B cell (primary cell): ENCODE measurements at regions of chr9 and their contacts with region 1.

Region 1: DNA sequence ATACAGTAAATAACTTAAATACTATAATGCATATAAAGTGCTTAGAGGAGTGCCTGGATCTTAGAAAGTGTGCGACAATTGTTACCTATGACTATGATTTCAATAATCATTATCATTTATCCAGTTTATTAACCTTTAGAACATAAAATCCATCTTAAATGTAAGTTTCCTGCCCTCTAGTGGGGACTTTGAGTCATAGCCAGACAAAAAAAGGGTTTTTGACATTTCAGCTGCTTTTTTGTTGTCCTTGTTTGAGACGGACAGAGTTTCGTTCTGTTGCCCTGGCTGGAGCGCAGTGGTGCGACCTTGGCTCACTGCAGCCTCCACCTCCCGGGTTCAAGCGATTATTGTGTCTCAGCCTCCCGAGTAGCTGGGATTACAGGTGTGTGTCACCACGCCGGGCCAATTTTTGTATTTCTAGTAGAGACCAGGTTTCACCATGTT is 9.7 kb upstream of the C9orf152 start:
- DNase-seq: peak; percentile 62
- ATAC-seq: no peak
- H3K4me3 ChIP-seq: no peak overlapping the region
- H3K4me3 Mint-ChIP-seq: no peak overlapping the region
- H3K27ac ChIP-seq: no peak overlapping the region
- H3K27ac Mint-ChIP-seq: no peak overlapping the region
- H3K4me1 ChIP-seq: no peaks in the 10 kb centered on the region
- H3K4me1 Mint-ChIP-seq: peaks cover 3% of the 10 kb centered on the region
- H3K27me3 ChIP-seq: no peaks in the 10 kb centered on the region
- H3K27me3 Mint-ChIP-seq: peaks cover 11% of the 10 kb centered on the region
- CTCF ChIP-seq: peak; percentile 85

Region 2: DNA sequence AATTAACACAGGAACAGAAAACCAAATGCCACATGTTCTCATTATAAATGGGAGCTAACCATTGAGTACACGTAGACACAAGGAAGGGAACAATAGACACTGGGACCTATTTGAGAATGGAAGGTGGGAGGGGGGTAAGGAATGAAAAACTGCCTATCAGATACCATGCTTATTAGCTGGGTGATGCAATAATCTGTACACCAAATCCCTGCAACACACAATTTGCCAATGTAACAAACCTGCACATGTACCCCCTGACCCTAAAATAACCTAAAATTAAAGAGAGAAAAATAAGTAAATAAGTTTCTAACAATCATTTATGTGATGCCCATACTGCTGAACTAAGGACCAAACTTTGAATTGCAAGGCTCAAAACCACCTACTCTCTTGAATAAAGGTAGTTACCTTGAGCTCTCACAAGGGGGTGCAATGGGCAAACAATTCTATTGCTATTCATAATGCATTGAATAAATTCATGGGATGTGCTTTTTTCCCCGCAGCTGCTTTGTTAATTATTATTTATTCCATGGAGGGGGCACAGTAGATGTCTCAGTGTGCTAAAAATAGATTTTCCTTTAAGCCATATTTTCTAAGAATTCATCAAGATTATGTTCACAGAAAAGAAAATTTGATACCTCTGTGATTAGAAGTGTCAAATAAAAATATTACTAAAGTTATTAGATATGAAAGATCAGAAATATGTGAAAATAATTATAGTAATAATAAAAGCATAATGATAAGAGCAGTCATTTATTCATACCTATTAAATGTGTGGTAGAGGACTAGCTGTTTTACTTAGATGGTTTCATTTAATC is 643.4 kb before region 1 on chr9:
- CTCF ChIA-PET with region 1: interaction called, 120 read pairs
- POLR2A ChIA-PET with region 1: no interaction called
- intact Hi-C with region 1: no loop called
- DNase-seq: peak; percentile 47
- ATAC-seq: no peak
- H3K4me3 ChIP-seq: no peak overlapping the region
- H3K4me3 Mint-ChIP-seq: no peak overlapping the region
- H3K27ac ChIP-seq: no peak overlapping the region
- H3K27ac Mint-ChIP-seq: no peak overlapping the region
- H3K4me1 ChIP-seq: no peaks in the 10 kb centered on the region
- H3K4me1 Mint-ChIP-seq: no peaks in the 10 kb centered on the region
- H3K27me3 ChIP-seq: peaks cover 0 to 4% (median 0%) of the 10 kb centered on the region in 4 experiments
- H3K27me3 Mint-ChIP-seq: peaks cover 12% of the 10 kb centered on the region
- CTCF ChIP-seq: peak; percentile 82

Region 3: DNA sequence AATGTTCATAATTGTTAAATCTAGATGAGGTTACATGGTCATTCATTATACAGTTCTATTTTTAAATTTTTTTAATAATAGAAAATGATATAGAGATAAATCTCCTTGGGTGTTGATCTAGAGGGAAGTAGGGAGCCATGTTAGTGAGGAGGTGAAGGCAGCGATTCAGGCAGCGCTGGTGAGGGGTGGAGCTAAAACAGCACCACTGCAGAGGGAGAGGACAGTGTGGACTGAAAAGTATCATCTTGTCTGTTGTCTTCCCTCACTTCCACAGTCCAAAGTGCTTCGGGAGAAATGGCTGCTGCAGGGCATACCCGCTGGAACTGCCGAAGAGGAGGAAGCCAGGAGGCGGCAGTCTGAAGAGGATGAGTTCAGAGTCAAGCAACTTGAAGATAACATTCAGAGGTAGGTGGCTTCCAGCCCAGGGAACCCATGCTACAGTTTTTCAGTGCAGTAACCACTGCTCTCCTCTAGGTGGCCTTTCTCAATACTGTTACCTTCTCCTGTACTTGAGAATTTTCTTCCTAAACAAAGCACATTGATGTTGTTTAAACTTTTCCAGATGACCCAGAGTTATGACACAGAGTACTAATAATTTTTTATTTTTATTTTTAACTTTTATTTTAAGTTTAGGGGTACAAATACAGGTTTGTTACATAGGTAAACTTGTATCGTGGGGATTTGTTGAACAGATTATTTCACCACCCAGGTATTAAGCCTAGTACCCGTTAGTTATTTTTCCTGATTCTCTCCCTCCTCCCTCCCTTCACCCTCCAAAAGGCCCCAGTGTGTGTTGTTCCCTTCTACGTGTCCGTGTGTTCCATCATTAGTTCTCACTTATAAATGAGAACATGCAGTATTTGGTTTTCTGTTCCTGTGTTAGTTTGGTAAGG is 337.2 kb before region 1 on chr9:
- CTCF ChIA-PET with region 1: interaction called, 26 read pairs
- POLR2A ChIA-PET with region 1: no interaction called
- intact Hi-C with region 1: loop called (anchors 1 kb)
- DNase-seq: peak; percentile 55
- ATAC-seq: peak; percentile 78
- H3K4me3 ChIP-seq: no peak overlapping the region
- H3K4me3 Mint-ChIP-seq: peak overlapping the region; percentile 37
- H3K27ac ChIP-seq: no peak overlapping the region
- H3K27ac Mint-ChIP-seq: no peak overlapping the region
- H3K4me1 ChIP-seq: peaks cover 0 to 3% of the 10 kb centered on the region in 2 donors
- H3K4me1 Mint-ChIP-seq: peaks cover 4% of the 10 kb centered on the region
- H3K27me3 ChIP-seq: peaks cover 0 to 4% (median 0%) of the 10 kb centered on the region in 4 experiments
- H3K27me3 Mint-ChIP-seq: peaks cover 23% of the 10 kb centered on the region
- CTCF ChIP-seq: peak; percentile 84

Region 4: DNA sequence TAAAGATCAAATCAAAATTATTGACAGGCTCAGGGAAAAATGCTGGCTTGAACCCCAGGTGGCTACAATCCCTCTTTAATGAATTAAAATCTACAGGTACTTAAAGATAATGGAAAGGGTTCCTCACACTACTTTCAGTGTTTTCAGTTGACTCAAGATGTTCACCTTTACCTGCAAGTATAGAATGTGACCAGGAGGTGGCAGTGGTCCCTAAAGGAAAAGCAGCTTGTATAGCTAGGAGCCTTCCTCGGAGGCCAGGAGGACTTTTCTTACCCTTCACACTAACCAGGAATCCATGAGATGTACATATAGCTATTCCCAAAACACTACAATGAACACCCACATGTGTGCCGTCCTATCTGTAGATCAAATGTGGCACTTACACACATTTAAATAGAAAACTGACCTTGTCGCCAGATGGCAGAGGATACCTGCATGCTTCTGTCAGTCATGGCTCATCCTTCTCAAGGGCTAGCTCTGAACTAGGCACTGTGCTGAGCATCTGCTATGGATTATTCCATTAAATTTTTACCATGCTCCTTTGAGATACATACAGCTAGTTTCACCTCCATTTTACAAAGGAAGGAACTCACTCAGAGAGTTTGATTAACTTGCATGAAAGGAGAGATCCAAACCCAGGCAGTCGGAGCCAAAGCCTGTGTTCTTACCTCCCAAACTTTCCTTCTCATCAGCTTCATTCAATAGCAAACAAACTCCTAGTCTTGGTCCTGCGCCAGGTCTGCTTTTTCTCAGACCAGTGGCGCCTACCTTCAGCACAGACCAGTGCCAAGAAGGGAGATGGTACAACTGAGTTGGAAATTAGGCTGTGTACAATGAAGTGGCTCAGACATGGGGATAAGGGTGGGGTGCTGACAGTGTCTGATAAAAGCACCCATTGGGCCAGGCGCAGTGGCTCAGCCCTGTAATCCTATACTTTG is 34.2 kb before region 1 on chr9:
- CTCF ChIA-PET with region 1: interaction called, 33 read pairs
- POLR2A ChIA-PET with region 1: no interaction called
- intact Hi-C with region 1: loop called (anchors 1 kb)
- DNase-seq: peak; percentile 65
- ATAC-seq: peak; percentile 53
- H3K4me3 ChIP-seq: no peak overlapping the region
- H3K4me3 Mint-ChIP-seq: no peak overlapping the region
- H3K27ac ChIP-seq: no peak overlapping the region
- H3K27ac Mint-ChIP-seq: no peak overlapping the region
- H3K4me1 ChIP-seq: peaks cover 0 to 2% of the 10 kb centered on the region in 2 donors
- H3K4me1 Mint-ChIP-seq: peaks cover 4% of the 10 kb centered on the region
- H3K27me3 ChIP-seq: no peaks in the 10 kb centered on the region
- H3K27me3 Mint-ChIP-seq: peaks cover 6% of the 10 kb centered on the region
- CTCF ChIP-seq: peak; percentile 80

Region 5: DNA sequence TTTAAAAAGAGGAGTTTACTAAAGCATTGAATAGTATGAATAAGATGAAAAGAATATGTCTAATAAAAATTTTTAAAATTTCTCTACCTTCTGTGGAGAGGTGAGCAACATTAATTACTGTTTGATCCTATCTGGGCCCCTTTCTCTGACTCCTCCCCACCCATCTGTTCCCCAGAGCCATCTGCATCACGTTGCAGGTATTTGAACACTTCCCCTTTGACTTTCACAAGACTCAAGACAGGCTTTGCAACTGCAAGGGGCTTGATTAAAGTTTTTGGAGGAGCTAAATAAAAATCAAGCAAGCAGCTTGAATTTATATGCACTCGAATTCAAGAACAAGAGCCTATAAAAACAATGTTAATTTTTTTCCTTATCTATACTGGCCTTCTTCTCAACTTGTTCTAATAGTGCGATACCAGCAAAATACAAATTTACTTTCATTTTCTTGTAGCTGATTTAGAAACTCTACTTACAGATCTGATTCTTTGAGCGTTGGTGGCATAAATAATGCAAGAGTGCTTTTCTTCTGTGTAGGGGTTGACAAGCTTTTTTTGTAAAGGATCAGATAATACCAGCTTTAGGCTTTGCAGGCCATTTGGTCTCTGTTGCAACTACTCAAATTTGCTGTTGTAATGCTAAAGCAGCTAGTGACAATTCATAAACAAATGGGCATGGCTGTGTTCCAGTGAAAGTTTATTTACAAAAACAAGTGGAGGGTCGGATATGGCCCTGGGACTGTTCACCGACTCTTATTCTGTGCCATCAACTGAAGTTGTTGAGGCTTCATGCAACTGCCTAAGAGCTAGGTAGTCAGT is 98.8 kb after region 1 on chr9:
- CTCF ChIA-PET with region 1: no interaction called
- POLR2A ChIA-PET with region 1: no interaction called
- intact Hi-C with region 1: no loop called
- DNase-seq: peak; percentile 44
- ATAC-seq: peak; percentile 36
- H3K4me3 ChIP-seq: peak overlapping the region in 4 of 5 experiments; percentile 13 to 48 (median 42)
- H3K4me3 Mint-ChIP-seq: peak overlapping the region; percentile 80
- H3K27ac ChIP-seq: peak overlapping the region; percentile 10 to 11
- H3K27ac Mint-ChIP-seq: peak overlapping the region; percentile 74
- H3K4me1 ChIP-seq: peaks cover 5 to 12% of the 10 kb centered on the region in 2 donors
- H3K4me1 Mint-ChIP-seq: peaks cover 12% of the 10 kb centered on the region
- H3K27me3 ChIP-seq: no peaks in the 10 kb centered on the region
- H3K27me3 Mint-ChIP-seq: no peaks in the 10 kb centered on the region
- CTCF ChIP-seq: no peak

Region 6: DNA sequence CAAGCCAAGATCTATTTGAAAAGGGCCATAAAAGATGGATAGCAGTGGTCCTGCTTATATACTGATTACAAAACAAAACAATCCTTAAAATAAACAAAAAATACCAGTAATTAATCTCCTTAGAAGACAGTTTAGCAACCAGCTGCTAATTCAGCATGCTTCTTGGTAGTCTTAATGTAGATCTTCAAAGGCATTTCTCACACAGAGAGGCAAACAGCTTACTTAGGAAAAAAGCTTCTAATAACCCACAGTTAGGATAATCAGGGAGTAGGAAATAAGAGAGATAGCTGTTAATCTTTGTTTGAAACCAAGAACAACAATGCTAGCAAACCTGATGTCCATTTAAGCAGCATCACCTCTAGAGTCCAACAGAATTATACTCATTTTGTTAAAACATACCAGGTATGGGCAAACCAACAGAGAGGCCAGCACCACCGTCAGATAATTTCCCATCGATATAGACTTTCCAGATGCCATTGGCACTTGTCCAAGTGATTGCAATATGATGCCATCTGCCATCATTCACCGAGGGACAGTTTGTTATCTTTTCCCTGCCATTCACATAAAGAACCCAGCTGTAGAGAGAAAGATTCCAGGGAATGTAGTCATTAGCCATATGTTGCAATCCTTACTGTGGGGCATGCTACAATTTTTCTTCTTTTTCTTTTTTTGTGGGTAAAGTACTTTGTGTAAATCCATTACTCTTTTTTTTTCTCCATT is 225.6 kb after region 1 on chr9:
- CTCF ChIA-PET with region 1: no interaction called
- POLR2A ChIA-PET with region 1: no interaction called
- intact Hi-C with region 1: no loop called
- DNase-seq: no peak
- ATAC-seq: no peak
- H3K4me3 ChIP-seq: no peak overlapping the region
- H3K4me3 Mint-ChIP-seq: no peak overlapping the region
- H3K27ac ChIP-seq: no peak overlapping the region
- H3K27ac Mint-ChIP-seq: no peak overlapping the region
- H3K4me1 ChIP-seq: no peaks in the 10 kb centered on the region
- H3K4me1 Mint-ChIP-seq: no peaks in the 10 kb centered on the region
- H3K27me3 ChIP-seq: peaks cover 0 to 5% (median 1%) of the 10 kb centered on the region in 4 experiments
- H3K27me3 Mint-ChIP-seq: peaks cover 4% of the 10 kb centered on the region
- CTCF ChIP-seq: no peak